Breast epithelium (tissue), 4 donors: ENCODE measurements at regions of chr11 and their contacts with region 1.

Region 1: GRCh38 chr11:14300661-14301304 is 58.2 kb downstream of the RRAS2 start:
- DNase-seq: peak in 1 of 2 donors; percentile 37
- H3K4me3 ChIP-seq: no peak overlapping the region
- H3K27ac ChIP-seq: no peak overlapping the region
- H3K4me1 ChIP-seq: no peaks in the 10 kb centered on the region
- H3K27me3 ChIP-seq: no peaks in the 10 kb centered on the region
- CTCF ChIP-seq: peak; percentile 55 to 83 (median 70)
- POLR2A ChIP-seq: no peak

Region 2: DNA sequence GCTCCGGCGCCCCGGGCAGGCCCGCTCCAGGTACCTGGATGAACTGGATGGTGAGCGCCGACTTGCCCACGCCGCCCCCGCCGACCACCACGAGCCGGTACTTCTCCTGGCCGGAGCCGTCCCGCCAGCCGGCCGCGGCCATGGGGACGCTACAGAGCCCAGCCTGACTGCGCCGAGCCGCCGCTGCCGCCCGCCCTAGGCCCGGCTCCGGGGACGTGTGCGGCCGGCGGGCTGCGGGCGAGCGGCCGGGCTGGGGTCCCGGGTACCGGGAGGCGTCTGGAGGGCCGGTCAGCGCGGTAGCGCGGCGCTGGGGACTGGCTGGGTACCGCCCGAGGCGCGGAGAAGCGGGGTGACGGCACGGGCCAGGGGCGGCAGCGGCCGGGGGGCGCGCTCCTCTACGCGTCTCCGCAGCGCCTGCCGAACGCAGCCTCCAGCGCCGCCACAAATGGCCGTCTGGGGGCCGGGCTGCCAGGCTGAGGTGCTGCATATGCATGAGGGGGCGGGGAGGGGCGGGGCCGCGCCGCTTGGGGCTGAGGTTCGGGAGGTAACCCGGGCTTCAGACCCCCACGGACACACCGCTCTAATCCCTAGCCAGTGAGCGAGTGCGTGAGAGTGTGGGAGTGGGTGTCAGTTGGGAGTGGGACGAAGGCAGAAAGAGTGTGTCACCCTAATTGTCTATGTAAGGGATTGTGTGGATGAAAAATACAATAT is 58.1 kb after region 1 on chr11 and contains the start of gene RRAS2:
- intact Hi-C with region 1: loop called (anchors 1 kb)
- DNase-seq: peak; percentile 56 to 70
- H3K4me3 ChIP-seq: peak within 1 kb of the TSS; percentile 71 to 89 (median 86)
- H3K27ac ChIP-seq: peak within 1 kb of the TSS; percentile 86 to 91
- H3K4me1 ChIP-seq: no peaks in the 10 kb centered on the region
- H3K27me3 ChIP-seq: no peaks in the 10 kb centered on the region
- CTCF ChIP-seq: no peak
- POLR2A ChIP-seq: no peak
- total RNA-seq, gene RRAS2: 37.4 to 58.1 (median 46.4) TPM

Region 3: DNA sequence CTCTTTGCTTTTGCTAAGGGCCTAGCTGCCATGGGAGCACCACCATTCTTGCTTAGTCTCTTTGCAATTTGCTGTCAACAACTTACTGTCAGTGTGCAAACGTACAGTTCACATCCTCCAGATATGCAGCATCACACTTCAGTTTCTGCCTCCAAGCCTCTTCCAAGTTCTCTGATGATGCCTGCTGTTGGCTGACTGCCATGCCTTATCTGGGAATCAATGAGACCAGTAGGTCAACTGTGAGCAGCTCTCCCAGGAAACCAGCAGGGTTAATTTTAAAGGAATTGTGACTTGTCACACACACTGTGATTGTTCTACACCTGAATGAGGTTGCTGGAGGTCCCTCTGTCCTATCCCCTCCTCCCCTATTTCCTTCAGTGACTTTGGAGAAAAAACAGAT is 142.9 kb after region 1 on chr11:
- intact Hi-C with region 1: loop called (anchors 10 kb)
- DNase-seq: no peak
- H3K4me3 ChIP-seq: no peak overlapping the region
- H3K27ac ChIP-seq: no peak overlapping the region
- H3K4me1 ChIP-seq: no peaks in the 10 kb centered on the region
- H3K27me3 ChIP-seq: no peaks in the 10 kb centered on the region
- CTCF ChIP-seq: no peak
- POLR2A ChIP-seq: no peak